Sciatic nerve (tissue), 2 donors: ENCODE measurements at regions of chr9 and their contacts with region 1.

Region 1: GRCh38 chr9:105039175-105039799 is 111.3 kb upstream of the ABCA1 start:
- DNase-seq: no peak
- ATAC-seq: no peak

Region 2: DNA sequence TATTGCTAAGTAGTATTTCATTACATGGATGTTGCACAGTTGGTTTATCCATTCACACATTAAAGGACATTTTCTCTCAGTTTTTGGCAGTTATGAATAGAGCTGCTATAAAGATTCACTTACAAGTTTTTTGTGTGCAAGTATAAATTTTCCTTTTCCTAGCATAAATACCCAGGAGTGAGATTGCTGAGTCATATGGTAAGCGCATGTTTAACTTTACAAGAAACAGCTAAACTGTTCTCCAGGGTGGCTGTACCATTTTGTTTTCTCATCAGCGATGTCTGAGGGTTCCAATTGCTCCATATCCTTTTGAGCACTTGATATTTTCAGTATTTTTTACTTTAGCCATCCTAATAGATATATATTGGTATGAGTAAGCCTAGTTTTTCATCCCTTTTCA is 94.9 kb before region 1 on chr9:
- intact Hi-C with region 1: no loop called
- DNase-seq: no peak
- ATAC-seq: no peak

Region 3: GRCh38 chr9:105138306-105138801 is 99.1 kb after region 1 on chr9:
- intact Hi-C with region 1: loop called (anchors 10 kb)
- DNase-seq: peak; percentile 81
- ATAC-seq: peak; percentile 96